ENCODE measurements at regions of chr2 and their contacts with region 1.

Region 1: DNA sequence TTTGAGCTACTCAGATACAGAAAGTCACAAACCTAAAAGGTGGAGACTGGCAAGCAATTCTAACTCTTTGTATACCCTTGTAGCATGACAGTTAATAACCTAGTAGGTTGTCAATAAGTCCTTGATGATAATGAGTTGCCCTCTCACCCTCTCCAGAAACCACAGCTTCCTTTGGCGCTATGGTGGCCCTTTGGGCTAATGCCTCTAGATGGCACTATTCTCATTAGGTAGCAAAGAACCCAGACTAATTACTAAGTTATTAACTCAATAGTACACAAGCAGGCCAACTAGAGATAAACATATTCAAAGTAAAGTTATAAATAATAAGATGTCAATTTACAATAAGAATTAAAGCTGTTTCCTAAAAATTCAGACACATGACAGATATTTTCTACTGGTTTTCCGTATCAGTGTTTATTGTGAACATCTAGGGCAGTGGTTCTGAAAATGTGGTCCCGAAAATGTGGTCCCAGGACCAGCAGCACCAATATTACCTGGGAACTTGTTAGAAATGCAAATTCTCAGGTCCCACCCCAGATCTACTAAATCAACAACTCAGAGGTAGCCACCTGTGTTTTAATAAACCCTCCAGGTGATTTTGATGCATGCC is 41.1 kb downstream of the LDAH start:
- DNase-seq: peak in 1 of 2 experiments; percentile 43
- H3K4me3 ChIP-seq: no peak overlapping the region
- H3K4me3 Mint-ChIP-seq: no peak overlapping the region
- H3K27ac Mint-ChIP-seq: no peak overlapping the region
- H3K4me1 ChIP-seq: peaks cover 7% of the 10 kb centered on the region; the same call in 1 of the 2 replicates
- H3K4me1 Mint-ChIP-seq: peaks cover 15% of the 10 kb centered on the region
- H3K27me3 ChIP-seq: no peaks in the 10 kb centered on the region
- H3K27me3 Mint-ChIP-seq: no peaks in the 10 kb centered on the region
- CTCF ChIP-seq: peak; percentile 57 to 75

Region 2: DNA sequence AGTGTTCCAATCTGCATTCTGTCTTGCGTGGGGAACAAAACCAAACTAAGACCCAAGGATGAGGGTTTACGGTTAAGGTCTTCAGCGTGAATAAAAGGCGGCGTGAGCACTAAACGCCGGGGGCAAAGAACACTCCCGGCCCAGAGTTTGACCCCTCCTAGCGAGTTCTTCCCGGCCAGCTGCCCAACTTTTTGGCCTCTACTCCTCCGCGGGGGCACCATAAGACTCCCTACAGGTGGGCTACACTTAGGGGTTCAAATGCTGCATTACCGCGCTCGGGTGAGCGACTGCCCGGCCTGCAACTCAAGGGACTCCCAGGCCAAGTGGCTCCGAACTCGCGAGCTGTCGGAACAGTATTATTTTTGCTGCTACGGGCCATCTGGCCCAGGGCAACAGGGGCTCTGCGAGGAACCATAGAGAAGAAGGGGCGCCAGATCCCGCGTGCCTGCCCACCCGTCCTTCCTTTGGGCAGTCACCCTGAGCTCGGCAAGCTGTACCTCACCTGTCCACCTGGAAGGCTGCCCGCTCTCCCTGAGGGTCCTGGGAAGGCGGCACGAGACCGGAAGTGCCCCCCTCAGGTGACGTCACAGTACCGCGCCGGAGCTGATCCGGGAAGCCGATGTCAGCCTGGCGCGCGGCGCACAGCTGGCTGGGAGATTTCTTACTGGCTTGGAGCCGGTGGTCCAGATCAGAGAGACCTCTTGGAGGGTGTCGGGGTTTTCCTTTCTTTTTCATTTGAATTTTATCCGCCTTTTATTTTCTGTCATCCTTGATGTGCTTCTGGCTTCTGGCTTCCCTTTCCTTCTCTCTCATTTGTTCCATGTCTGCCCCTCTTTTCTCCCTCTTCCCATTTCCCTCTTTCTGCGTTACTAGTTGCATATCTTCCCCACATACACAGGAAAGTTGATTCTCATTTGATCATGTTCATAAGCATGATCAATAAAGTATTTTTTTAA is 41.1 kb after region 1 on chr2 and contains the start of gene LDAH:
- CTCF ChIA-PET with region 1: interaction called, 8 read pairs
- POLR2A ChIA-PET with region 1: interaction called, 3 read pairs
- intact Hi-C with region 1: loop called (anchors 1 kb)
- DNase-seq: peak; percentile 94 to 95
- H3K4me3 ChIP-seq: peak within 1 kb of the TSS; percentile 83
- H3K4me3 Mint-ChIP-seq: peak within 1 kb of the TSS; percentile 98
- H3K27ac Mint-ChIP-seq: peak within 1 kb of the TSS; percentile 99
- H3K4me1 ChIP-seq: peaks cover 13% of the 10 kb centered on the region
- H3K4me1 Mint-ChIP-seq: peaks cover 5% of the 10 kb centered on the region
- H3K27me3 ChIP-seq: no peaks in the 10 kb centered on the region
- H3K27me3 Mint-ChIP-seq: no peaks in the 10 kb centered on the region
- CTCF ChIP-seq: no peak
- total RNA-seq, gene LDAH: 37.2 and 40.5 TPM in 2 replicates

Region 3: GRCh38 chr2:20916604-20917286 is 135.0 kb after region 1 on chr2:
- CTCF ChIA-PET with region 1: interaction called, 8 read pairs
- POLR2A ChIA-PET with region 1: no interaction called
- intact Hi-C with region 1: loop called (anchors 1 kb)
- DNase-seq: peak; percentile 62 to 64
- H3K4me3 ChIP-seq: no peak overlapping the region
- H3K4me3 Mint-ChIP-seq: no peak overlapping the region
- H3K27ac Mint-ChIP-seq: no peak overlapping the region
- H3K4me1 ChIP-seq: no peaks in the 10 kb centered on the region
- H3K4me1 Mint-ChIP-seq: peaks cover 7% of the 10 kb centered on the region
- H3K27me3 ChIP-seq: no peaks in the 10 kb centered on the region
- H3K27me3 Mint-ChIP-seq: peaks cover 8% of the 10 kb centered on the region
- CTCF ChIP-seq: peak; percentile 49 to 78

Region 4: GRCh38 chr2:20962939-20963557 is 181.3 kb after region 1 on chr2:
- CTCF ChIA-PET with region 1: interaction called, 22 read pairs
- POLR2A ChIA-PET with region 1: no interaction called
- intact Hi-C with region 1: loop called (anchors 1 kb)
- DNase-seq: peak; percentile 73 to 80
- H3K4me3 ChIP-seq: no peak overlapping the region
- H3K4me3 Mint-ChIP-seq: no peak overlapping the region
- H3K27ac Mint-ChIP-seq: no peak overlapping the region
- H3K4me1 ChIP-seq: no peaks in the 10 kb centered on the region
- H3K4me1 Mint-ChIP-seq: no peaks in the 10 kb centered on the region
- H3K27me3 ChIP-seq: no peaks in the 10 kb centered on the region; the same call in 1 of the 2 replicates
- H3K27me3 Mint-ChIP-seq: peaks cover 5% of the 10 kb centered on the region
- CTCF ChIP-seq: peak; percentile 83 to 90

Measured in Caco-2 (cell line).